A549 (cell line): ENCODE measurements at regions of chr18 and their contacts with region 1.

Region 1: GRCh38 chr18:46281185-46282176 is 177.3 kb downstream of the HAUS1 start:
- DNase-seq: peak; percentile 43 to 60
- ATAC-seq: peak; percentile 89 to 95
- H3K4me3 ChIP-seq: no peak overlapping the region
- H3K27ac ChIP-seq: no peak overlapping the region
- H3K4me1 ChIP-seq: no peaks in the 10 kb centered on the region
- CTCF ChIP-seq: peak; percentile 68
- EP300 ChIP-seq: no peak
- POLR2A ChIP-seq: no peak
- RAD21 ChIP-seq: peak; percentile 78 to 81

Region 2: GRCh38 chr18:46173393-46174341 is 107.8 kb before region 1 on chr18:
- CTCF ChIA-PET with region 1: interaction called, 17 read pairs
- POLR2A ChIA-PET with region 1: no interaction called
- DNase-seq: peak; percentile 83 to 89
- ATAC-seq: peak; percentile 94 to 96
- H3K4me3 ChIP-seq: peak overlapping the region; percentile 98
- H3K27ac ChIP-seq: peak overlapping the region; percentile 92 to 98
- H3K4me1 ChIP-seq: peaks cover 22% of the 10 kb centered on the region
- CTCF ChIP-seq: peak; percentile 55
- EP300 ChIP-seq: 0 out of 5 replicates have a peak, but pooled peaks of 1 of the 2 experiments have one; percentile 2
- POLR2A ChIP-seq: peak; percentile 29
- RAD21 ChIP-seq: peak; percentile 67 to 72

Region 3: DNA sequence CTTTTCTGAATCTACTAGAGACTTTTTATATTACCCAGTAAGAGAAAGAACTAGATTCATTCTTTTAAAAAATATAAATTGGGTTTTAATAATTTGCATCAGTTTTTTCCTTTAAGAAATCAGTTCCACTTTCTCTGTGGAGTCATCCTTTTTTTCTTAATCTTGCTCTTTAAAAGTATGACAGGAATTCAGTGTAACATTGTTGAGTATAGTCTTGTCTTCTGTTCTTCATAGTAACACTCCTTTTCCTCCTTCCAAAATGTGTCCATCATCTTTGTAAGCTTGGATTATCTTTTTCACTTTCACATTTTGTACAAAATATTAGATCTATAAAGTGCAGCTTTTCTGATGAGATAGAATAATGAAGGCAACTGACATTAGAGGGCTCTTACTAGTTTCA is 41.9 kb before region 1 on chr18:
- CTCF ChIA-PET with region 1: no interaction called
- POLR2A ChIA-PET with region 1: no interaction called
- DNase-seq: no peak
- ATAC-seq: no peak
- H3K4me3 ChIP-seq: no peak overlapping the region
- H3K27ac ChIP-seq: no peak overlapping the region
- H3K4me1 ChIP-seq: peaks cover 8% of the 10 kb centered on the region; the same call in 2 of the 3 replicates
- CTCF ChIP-seq: no peak
- EP300 ChIP-seq: no peak
- POLR2A ChIP-seq: no peak
- RAD21 ChIP-seq: no peak

Region 4: GRCh38 chr18:46297621-46298020 is 16.1 kb after region 1 on chr18:
- CTCF ChIA-PET with region 1: interaction called, 10 read pairs
- POLR2A ChIA-PET with region 1: no interaction called
- DNase-seq: no peak
- ATAC-seq: no peak
- H3K4me3 ChIP-seq: no peak overlapping the region
- H3K27ac ChIP-seq: no peak overlapping the region
- H3K4me1 ChIP-seq: no peaks in the 10 kb centered on the region
- CTCF ChIP-seq: no peak
- EP300 ChIP-seq: no peak
- POLR2A ChIP-seq: no peak
- RAD21 ChIP-seq: no peak

Region 5: GRCh38 chr18:46481048-46481846 is 199.8 kb after region 1 on chr18:
- CTCF ChIA-PET with region 1: interaction called, 35 read pairs
- POLR2A ChIA-PET with region 1: no interaction called
- DNase-seq: peak; percentile 10 to 35
- ATAC-seq: peak; percentile 47 to 81; a peak in 5 of 6 replicates
- H3K4me3 ChIP-seq: no peak overlapping the region
- H3K27ac ChIP-seq: no peak overlapping the region
- H3K4me1 ChIP-seq: no peaks in the 10 kb centered on the region
- CTCF ChIP-seq: peak; percentile 35; the same call in 2 of the 3 replicates
- EP300 ChIP-seq: no peak
- POLR2A ChIP-seq: no peak
- RAD21 ChIP-seq: peak; percentile 39 to 42

Region 6: DNA sequence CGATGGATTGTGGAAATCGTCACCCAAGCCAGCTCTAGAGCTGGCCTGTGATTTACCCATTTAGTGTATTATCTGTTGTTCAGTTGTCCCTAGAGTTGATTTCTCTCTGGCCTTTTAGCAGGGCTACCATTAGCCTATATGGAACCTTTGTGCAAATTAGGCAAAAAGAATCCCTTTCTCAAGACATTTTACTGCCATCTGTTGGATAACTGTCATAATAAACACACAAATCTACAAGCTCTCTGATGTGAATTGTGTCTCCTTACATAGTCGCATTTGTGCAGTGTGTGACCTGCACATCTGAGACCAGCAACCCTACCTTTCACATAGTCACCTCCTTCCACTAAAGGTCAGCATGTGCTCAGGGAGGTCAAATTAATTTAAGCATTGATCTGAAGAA is 341.5 kb after region 1 on chr18:
- CTCF ChIA-PET with region 1: interaction called, 44 read pairs
- POLR2A ChIA-PET with region 1: interaction called, 3 read pairs
- DNase-seq: peak in 1 of 2 experiments; percentile 11
- ATAC-seq: peak in 1 of 2 experiments; percentile 42; a peak in 2 of 6 replicates
- H3K4me3 ChIP-seq: no peak overlapping the region
- H3K27ac ChIP-seq: no peak overlapping the region
- H3K4me1 ChIP-seq: no peaks in the 10 kb centered on the region
- CTCF ChIP-seq: peak; percentile 29; the same call in 2 of the 3 replicates
- EP300 ChIP-seq: no peak
- POLR2A ChIP-seq: no peak
- RAD21 ChIP-seq: peak; percentile 34 to 39; a peak in 2 of 5 replicates